Head of caudate nucleus (tissue), 42 donors: ENCODE measurements at regions of chr11 and their contacts with region 1.

Region 1: GRCh38 chr11:695538-696248 is at the start of gene TMEM80:
- DNase-seq: peak; percentile 93 to 100 (median 98)

Region 2: GRCh38 chr11:568306-569157 is 127.2 kb before region 1 on chr11:
- intact Hi-C with region 1: loop called (anchors 10 kb)
- DNase-seq: peak; percentile 73 to 95 (median 92)

Region 3: DNA sequence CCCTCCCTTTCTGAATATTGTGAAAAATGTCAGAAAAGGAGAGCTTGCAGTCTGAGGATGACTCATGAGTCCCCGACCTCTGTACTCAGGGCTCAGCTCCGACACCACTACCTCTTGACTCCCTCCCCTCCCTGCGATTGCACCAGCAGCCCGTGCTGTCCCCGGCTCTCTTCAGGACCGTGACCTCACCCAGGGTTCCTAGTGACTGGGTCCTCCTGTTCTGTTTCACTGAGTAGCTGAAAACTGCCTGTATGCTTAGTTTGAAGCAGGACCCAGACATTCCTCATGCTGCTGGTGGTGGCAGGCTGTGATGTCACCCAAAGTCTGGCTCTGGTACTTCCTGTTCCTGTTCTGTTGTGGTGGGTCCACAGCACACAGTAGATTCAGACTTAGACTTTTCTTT is 107.7 kb before region 1 on chr11:
- intact Hi-C with region 1: no loop called
- DNase-seq: peak in 5 of 42 donors; percentile 32 to 57 (median 46)